BJ (cell line): ENCODE measurements at regions of chr19 and their contacts with region 1.

Region 1: DNA sequence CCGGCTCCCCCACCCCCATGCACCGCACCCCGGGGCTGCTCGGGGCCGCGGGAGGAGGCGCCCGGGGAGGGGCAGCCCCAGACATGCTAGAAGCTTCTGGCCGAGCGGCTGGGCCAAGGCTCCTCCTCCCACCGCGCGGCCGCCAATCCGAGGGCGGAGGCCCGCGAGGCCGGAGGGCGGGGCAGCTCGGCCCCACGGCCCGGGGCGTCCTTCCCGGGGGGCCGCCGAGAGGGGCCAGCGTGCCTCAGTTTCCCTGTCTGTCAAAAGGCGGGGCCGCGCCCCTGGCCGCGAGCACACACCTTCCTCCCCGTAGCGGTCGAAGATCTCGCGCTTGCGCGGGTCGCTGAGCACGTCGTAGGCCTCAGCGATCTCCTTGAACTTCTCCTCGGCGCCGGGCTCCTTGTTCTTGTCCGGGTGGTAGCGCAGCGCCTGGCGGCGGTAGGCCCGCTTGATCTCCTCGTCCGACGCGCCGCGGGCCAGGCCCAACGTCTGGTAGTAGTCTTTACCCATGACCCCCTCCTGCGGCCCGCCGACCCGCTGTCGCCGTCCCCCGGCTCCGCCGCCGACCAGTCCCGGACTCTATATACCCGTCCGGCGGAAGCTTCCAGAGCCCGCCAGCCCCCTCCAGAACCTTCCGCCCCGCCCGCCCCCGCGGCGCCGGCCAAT is at the start of gene DNAJB1:
- DNase-seq: no peak
- H3K4me3 ChIP-seq: peak within 1 kb of the TSS; percentile 90
- H3K27me3 ChIP-seq: no peaks in the 10 kb centered on the region
- CTCF ChIP-seq: no peak
- polyA plus RNA-seq, gene DNAJB1: 114 and 133 TPM in 2 replicates

Region 2: GRCh38 chr19:14383661-14384555 is 134.1 kb before region 1 on chr19:
- CTCF ChIA-PET with region 1: no interaction called
- POLR2A ChIA-PET with region 1: no interaction called
- DNase-seq: no peak
- H3K4me3 ChIP-seq: peak overlapping the region; percentile 12
- H3K27me3 ChIP-seq: no peaks in the 10 kb centered on the region
- CTCF ChIP-seq: peak; percentile 21; the same call in 1 of the 2 replicates

Region 3: DNA sequence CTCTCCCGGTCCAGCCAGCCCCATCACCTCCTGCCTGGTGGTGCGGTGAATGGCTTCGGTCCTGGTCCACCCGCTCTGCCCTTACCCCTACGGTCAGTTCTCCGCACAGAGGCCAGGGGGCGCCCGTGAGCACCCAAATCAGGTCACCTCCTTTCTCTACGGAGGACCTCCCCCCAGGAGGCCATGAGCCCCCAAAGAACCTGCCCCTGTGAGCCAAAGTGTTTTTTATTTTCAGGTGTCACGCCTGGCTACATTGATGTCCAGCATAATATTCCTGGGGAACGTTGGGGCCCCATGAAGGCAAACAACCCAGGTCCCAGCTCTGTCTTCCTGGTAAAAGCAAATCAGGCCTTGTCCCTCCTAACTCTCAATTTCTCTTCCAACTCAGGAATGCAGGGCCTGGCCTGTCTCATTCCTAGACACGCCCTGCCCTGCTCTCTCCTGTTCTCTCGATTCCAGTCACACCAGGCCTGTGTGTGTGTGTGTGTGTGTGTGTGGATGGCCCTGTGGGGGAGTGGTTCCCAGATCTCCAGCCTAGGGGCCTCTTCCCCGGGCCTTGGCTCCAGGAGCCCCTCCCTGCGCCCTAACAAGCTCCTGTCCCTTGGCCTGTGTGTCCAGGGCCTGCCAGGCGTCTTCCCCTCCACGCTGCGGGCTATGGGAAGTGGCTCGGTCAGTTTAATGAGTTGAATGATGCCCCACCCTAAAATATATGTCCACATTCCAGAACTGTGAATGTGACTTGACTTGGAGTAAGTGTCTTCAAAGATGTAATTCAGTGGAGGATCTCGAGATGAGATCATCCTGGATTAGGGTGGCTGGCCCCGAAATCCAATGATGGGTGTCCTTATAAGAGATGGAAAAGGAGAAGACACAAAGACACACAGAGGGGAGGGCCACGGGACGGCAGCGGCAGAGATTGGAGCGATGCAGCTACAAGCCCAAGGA is 12.2 kb before region 1 on chr19:
- CTCF ChIA-PET with region 1: interaction called, 23 read pairs
- POLR2A ChIA-PET with region 1: interaction called, 5 read pairs
- DNase-seq: peak; percentile 64
- H3K4me3 ChIP-seq: no peak overlapping the region
- H3K27me3 ChIP-seq: no peaks in the 10 kb centered on the region
- CTCF ChIP-seq: peak; percentile 85